Prostate gland (tissue), 2 donors: ENCODE measurements at regions of chr15 and their contacts with region 1.

Region 1: GRCh38 chr15:72783563-72784237 is at the start of gene ADPGK:
- DNase-seq: peak; percentile 87
- H3K4me3 ChIP-seq: peak within 1 kb of the TSS; percentile 92 to 99
- H3K27ac ChIP-seq: peak within 1 kb of the TSS; percentile 85 to 89
- H3K4me1 ChIP-seq: no peaks in the 10 kb centered on the region
- H3K27me3 ChIP-seq: no peaks in the 10 kb centered on the region
- CTCF ChIP-seq: peak in 1 of 4 experiments; percentile 38
- POLR2A ChIP-seq: peak; percentile 89
- total RNA-seq, gene ADPGK: 74.6 to 102 TPM

Region 2: GRCh38 chr15:73081321-73081958 is 297.7 kb after region 1 on chr15:
- intact Hi-C with region 1: loop called (anchors 5 kb)
- DNase-seq: peak; percentile 54
- H3K4me3 ChIP-seq: no peak overlapping the region
- H3K27ac ChIP-seq: no peak overlapping the region
- H3K4me1 ChIP-seq: peaks cover 11% of the 10 kb centered on the region
- H3K27me3 ChIP-seq: no peaks in the 10 kb centered on the region
- CTCF ChIP-seq: peak; percentile 33 to 80 (median 64)
- POLR2A ChIP-seq: no peak

Region 3: DNA sequence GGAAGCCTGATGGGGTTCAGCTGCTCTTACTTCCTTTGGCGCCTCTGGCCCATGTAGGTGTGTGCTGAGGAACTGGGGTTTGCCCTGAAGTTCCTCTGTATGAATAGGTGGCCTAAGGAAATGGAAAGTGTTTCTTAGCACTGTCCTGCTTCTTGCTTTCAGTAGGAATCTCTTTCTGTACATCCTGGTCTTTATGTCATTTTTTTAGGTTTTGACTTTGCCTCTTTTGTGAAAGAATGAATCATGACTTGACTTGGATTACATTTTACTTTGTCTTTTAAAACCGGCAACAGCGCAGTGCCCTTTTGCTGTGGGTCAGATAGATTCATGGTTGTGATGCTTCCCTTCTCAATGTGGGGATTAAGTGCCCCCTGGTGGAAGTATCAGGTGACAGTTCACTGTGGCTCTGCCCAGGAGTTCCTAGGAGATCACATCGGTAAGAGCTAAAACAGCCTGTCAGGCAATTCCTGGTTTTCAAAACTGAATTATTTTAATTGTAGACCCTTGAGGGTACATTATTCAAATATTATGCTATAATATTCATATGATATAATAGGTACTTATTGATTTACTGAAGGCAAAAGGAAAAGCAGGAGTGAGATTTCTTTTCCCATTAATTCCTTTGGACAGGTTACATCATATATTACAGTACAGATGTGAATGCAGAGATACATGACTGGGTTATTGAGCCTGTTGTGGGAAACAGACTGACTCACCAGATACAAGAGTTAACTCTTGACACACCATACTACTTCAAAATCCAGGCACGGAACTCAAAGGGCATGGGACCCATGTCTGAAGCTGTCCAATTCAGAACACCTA is 489.7 kb after region 1 on chr15:
- intact Hi-C with region 1: loop called (anchors 2 kb)
- DNase-seq: peak; percentile 19
- H3K4me3 ChIP-seq: no peak overlapping the region
- H3K27ac ChIP-seq: no peak overlapping the region
- H3K4me1 ChIP-seq: no peaks in the 10 kb centered on the region
- H3K27me3 ChIP-seq: no peaks in the 10 kb centered on the region
- CTCF ChIP-seq: peak; percentile 35 to 66 (median 58)
- POLR2A ChIP-seq: no peak